Gastrocnemius medialis (tissue), 4 donors: ENCODE measurements at regions of chr3 and their contacts with region 1.

Region 1: GRCh38 chr3:48556793-48557626 is at the start of gene PFKFB4:
- DNase-seq: peak; percentile 99 to 100
- ATAC-seq: peak; percentile 93
- H3K4me3 ChIP-seq: peak within 1 kb of the TSS; percentile 49 to 71 (median 63)
- H3K27ac ChIP-seq: peak within 1 kb of the TSS; percentile 59 to 85 (median 72)
- H3K4me1 ChIP-seq: peaks cover 35 to 40% of the 10 kb centered on the region in 2 donors
- H3K27me3 ChIP-seq: no peaks in the 10 kb centered on the region
- CTCF ChIP-seq: peak in 2 of 5 experiments; percentile 17 to 24
- POLR2A ChIP-seq: no peak
- total RNA-seq, gene PFKFB4: 0.87 to 2.6 (median 1.7) TPM

Region 2: GRCh38 chr3:48439820-48440589 is 117.0 kb before region 1 on chr3 and contains the starts of genes CCDC51 and TMA7:
- in situ Hi-C with region 1: no loop called
- intact Hi-C with region 1: loop called (anchors 2 kb)
- DNase-seq: peak; percentile 98
- ATAC-seq: peak; percentile 96 to 97
- H3K4me3 ChIP-seq: peak within 1 kb of the TSS; percentile 74 to 95 (median 92)
- H3K27ac ChIP-seq: peak within 1 kb of the TSS; percentile 85 to 96 (median 94)
- H3K4me1 ChIP-seq: peaks cover 21 to 24% of the 10 kb centered on the region in 2 donors
- H3K27me3 ChIP-seq: no peaks in the 10 kb centered on the region
- CTCF ChIP-seq: no peak
- POLR2A ChIP-seq: peak; percentile 84 to 95
- total RNA-seq, gene CCDC51: 4.9 to 12.2 (median 9.9) TPM
- total RNA-seq, gene TMA7: 202 to 353 (median 294) TPM

Region 3: DNA sequence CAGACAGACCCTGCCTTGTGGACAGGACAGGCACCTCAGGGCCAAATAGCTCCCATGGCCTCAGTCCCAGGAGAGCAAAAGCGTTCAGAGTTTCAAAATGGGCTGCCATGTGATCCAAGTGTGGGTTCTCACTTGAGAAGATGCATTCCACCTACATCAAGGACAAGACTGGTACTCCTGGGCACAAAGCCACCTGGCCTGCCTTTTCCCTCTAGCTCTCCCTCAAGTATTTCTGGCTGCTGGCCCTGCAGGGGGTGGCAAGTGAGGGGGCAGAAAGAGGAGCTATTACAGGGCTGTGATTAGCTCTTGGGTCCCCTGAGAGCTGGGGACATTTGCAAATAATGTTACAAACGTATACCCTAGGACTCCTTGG is 44.6 kb after region 1 on chr3:
- in situ Hi-C with region 1: no loop called
- intact Hi-C with region 1: loop called (anchors 1 kb)
- DNase-seq: peak; percentile 83 to 93
- ATAC-seq: peak; percentile 78 to 80
- H3K4me3 ChIP-seq: no peak overlapping the region
- H3K27ac ChIP-seq: peak overlapping the region; percentile 85 to 98 (median 92)
- H3K4me1 ChIP-seq: peaks cover 51 to 60% of the 10 kb centered on the region in 2 donors
- H3K27me3 ChIP-seq: no peaks in the 10 kb centered on the region
- CTCF ChIP-seq: no peak
- POLR2A ChIP-seq: peak in 1 of 2 donors; percentile 33

Region 4: GRCh38 chr3:48609088-48610005 is 52.3 kb after region 1 on chr3 and contains the start of gene UQCRC1:
- in situ Hi-C with region 1: no loop called
- intact Hi-C with region 1: loop called (anchors 2 kb)
- DNase-seq: peak; percentile 88 to 91
- ATAC-seq: peak; percentile 98
- H3K4me3 ChIP-seq: peak within 1 kb of the TSS; percentile 87 to 96 (median 94)
- H3K27ac ChIP-seq: peak within 1 kb of the TSS; percentile 90 to 98 (median 95)
- H3K4me1 ChIP-seq: peaks cover 16 to 21% of the 10 kb centered on the region in 2 donors
- H3K27me3 ChIP-seq: no peaks in the 10 kb centered on the region
- CTCF ChIP-seq: peak; percentile 85 to 91 (median 86)
- POLR2A ChIP-seq: peak; percentile 93
- total RNA-seq, gene UQCRC1: 679 to 861 (median 720) TPM

Region 5: GRCh38 chr3:48623851-48624547 is 67.0 kb after region 1 on chr3:
- in situ Hi-C with region 1: no loop called
- intact Hi-C with region 1: no loop called
- DNase-seq: no peak
- ATAC-seq: no peak
- H3K4me3 ChIP-seq: no peak overlapping the region
- H3K27ac ChIP-seq: no peak overlapping the region
- H3K4me1 ChIP-seq: no peaks in the 10 kb centered on the region
- H3K27me3 ChIP-seq: no peaks in the 10 kb centered on the region
- CTCF ChIP-seq: no peak
- POLR2A ChIP-seq: no peak

Region 6: DNA sequence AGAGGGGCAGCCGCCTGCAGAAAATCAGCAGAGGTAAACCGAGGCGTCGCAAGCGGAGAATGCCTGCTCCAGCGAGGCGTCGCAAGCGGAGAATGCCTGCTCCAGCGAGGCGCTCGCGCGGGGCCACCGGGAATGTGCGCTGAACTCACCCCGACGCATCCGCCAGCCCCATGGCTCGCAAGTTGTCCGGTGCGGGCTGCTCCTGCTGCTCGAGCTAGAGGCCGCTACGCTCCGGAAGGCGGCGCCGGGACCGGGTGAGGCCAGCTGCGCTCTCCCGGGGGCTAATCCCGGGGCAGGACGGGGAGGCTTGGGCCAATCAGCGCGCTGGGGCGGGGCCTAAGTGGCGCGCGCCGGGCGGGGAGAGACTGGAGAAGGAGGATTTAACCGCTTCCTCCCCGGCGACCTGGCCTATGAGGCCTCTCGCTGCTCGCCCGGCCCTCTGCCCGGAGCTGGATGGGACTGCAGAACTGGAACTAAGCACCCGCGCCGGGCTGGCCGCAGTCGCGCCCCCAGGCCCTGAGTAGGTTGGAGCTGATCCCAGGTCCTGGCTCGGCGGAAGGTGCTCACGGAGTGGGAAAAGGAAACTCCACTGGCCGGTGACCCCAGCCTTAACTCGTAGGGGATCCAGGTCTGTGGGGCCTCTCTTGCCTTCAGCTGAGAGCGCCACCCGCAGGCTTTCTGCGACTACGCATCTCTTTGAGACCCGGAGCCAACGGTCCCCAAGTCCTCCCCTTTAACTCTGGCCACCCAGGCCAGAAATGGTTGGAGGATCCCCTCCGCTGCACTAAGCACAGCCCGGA is 78.4 kb after region 1 on chr3 and contains the start of gene SLC26A6:
- in situ Hi-C with region 1: no loop called
- intact Hi-C with region 1: loop called (anchors 1 kb)
- DNase-seq: peak; percentile 94 to 95
- ATAC-seq: peak; percentile 93 to 94
- H3K4me3 ChIP-seq: peak within 1 kb of the TSS; percentile 60 to 97 (median 84)
- H3K27ac ChIP-seq: peak within 1 kb of the TSS; percentile 84 to 92 (median 90)
- H3K4me1 ChIP-seq: peaks cover 16 to 24% of the 10 kb centered on the region in 2 donors
- H3K27me3 ChIP-seq: no peaks in the 10 kb centered on the region
- CTCF ChIP-seq: peak in 4 of 5 experiments; percentile 30 to 59 (median 53)
- POLR2A ChIP-seq: peak; percentile 51 to 68
- total RNA-seq, gene SLC26A6: 6.1 to 17.3 (median 10.1) TPM

Region 7: DNA sequence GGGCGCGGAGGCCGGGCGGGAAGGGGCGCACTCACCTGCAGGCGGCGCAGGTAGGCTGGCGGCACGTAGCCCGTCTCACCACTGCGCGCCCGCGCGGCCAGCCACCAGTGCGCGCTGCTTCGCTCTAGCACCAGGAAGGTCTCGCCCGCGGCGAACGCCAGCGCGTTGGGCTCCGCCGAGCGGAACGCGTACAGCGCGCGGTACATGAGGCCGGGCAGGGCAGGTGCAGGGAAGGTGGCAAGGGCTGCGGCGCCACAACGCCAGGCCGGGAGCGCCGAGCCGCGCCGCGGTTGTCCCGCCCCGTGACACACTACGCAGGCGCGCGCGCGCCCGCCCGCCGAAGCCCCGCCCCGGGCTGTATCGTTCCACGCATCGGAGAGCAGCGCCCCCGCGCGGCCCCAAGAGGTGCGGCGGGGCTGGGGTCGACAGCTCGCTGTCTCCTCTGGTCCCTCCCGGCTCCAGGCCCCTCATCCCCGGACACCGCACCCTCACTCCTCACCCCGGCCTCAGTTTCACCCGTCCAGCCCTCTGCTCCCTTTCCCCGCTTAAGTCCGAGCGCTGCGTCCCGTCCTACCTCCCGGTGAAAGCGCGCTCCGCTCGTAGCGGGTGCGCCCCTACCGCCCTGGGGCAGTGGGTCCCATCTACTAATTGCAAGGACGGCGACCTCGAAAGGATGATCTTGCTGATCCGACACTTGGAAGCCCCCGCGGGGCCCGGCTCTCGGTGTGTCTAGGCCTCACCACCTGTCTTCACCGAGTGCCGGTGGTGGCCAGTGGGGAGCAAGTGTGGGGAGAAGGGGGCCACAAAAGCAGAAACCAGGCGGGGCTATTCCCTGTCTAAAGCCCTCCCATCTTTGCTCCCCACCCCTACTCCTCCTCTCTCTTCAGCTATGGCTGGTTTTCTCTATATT is 128.8 kb after region 1 on chr3 and contains the start of gene NCKIPSD:
- in situ Hi-C with region 1: no loop called
- intact Hi-C with region 1: loop called (anchors 5 kb)
- DNase-seq: peak; percentile 66 to 82
- ATAC-seq: peak; percentile 92 to 95
- H3K4me3 ChIP-seq: peak within 1 kb of the TSS; percentile 69 to 96 (median 84)
- H3K27ac ChIP-seq: peak within 1 kb of the TSS; percentile 73 to 92 (median 90)
- H3K4me1 ChIP-seq: peaks cover 30 to 36% of the 10 kb centered on the region in 2 donors
- H3K27me3 ChIP-seq: no peaks in the 10 kb centered on the region
- CTCF ChIP-seq: peak; percentile 64 to 96 (median 90)
- POLR2A ChIP-seq: peak; percentile 62 to 77
- total RNA-seq, gene NCKIPSD: 13.2 to 33.1 (median 19.4) TPM

Region 8: GRCh38 chr3:48697952-48698351 is 140.9 kb after region 1 on chr3:
- in situ Hi-C with region 1: no loop called
- intact Hi-C with region 1: no loop called
- DNase-seq: no peak
- ATAC-seq: no peak
- H3K4me3 ChIP-seq: no peak overlapping the region
- H3K27ac ChIP-seq: no peak overlapping the region
- H3K4me1 ChIP-seq: peaks cover 5 to 6% of the 10 kb centered on the region in 2 donors
- H3K27me3 ChIP-seq: no peaks in the 10 kb centered on the region
- CTCF ChIP-seq: no peak
- POLR2A ChIP-seq: no peak